Posterior cingulate gyrus (tissue), 11 donors: ENCODE measurements at regions of chr5 and their contacts with region 1.

Region 1: GRCh38 chr5:96934708-96935558 is 947 bp upstream of the LNPEP start:
- DNase-seq: peak; percentile 84 to 98 (median 92)

Region 2: DNA sequence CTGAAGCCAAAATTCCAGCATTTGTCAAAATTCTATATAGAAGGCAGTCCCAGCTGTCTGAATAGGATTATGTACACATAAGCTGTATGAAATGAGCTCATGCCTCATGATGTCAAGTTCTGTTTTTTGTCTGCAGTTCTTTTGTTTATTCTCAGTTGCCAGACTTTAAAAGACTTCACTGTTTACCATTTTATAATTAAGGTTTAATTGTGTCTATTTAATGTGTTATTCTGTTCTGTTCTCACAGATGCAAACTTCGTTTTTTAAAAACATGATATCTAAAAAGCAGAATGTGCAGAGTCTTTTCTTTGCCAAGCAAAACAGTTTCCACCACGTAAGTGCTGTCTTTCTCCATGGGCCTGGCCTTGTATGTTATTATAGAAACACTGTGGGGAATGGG is 158.3 kb before region 1 on chr5:
- intact Hi-C with region 1: loop called (anchors 10 kb)
- DNase-seq: no peak

Region 3: DNA sequence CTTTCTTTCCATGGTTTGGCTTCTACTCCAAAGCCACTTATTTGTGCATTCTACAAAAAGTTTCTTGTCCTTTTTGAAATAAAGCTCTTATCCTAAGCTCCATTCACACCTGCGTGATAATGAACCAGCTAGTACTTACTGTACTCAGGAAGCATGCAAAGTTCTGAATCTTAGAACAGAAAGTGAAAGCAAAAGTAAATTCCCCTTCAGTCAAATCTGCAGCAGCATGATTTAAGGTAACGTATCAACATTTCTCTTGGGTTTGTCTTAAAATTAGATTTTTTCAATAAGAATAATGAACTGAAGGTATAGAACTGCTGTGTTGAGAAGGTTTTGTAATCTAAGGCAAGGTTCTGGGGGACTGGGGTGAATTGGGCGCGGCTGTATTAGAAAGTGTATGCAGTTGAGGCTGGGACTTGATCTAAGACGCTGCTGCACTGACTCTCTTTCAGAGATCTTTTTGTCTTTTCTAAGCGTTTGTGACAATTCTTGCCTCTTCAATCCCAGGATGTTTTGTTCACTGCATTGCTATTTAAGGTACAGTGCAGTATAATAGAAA is 58.6 kb before region 1 on chr5 and contains the start of gene ERAP2:
- intact Hi-C with region 1: loop called (anchors 2 kb)
- DNase-seq: peak in 1 of 10 donors; percentile 55

Region 4: DNA sequence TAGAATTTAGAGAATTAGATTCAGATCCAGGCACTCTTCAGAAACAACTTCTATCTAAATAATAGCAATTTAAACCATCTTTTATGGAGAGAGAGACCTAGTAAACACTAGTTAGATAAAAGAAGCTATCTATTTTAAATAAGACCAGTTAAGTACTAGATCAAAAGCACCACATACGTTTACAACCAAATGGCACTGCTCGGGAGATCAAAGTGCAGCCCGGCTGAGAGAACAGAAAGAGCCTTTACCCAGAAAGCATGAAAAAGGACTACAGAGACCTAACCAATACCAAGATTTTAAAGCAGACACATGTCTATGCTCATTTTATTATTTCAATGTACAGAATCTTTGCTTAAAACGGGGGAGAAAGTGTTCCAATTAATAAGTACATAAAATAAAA is 176.7 kb after region 1 on chr5:
- intact Hi-C with region 1: no loop called
- DNase-seq: no peak

Region 5: DNA sequence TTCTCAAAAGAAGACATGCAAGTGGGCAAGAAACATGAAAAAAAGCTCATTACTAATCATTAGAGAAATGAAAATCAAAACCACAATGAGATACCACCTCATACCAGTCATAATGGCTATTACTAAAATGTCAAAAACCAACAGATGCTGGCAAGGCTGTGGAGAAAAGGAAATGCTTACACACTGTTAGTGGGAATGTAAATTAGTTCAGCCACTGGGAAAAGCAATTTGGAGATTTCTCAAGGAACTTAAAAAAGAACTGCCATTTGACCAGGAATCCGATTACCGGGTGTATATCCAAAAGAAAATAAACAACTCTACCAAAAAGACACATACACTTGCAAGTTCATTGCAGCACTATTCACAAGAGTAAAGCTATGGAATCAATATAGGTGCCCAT is 843.5 kb after region 1 on chr5:
- intact Hi-C with region 1: no loop called
- DNase-seq: no peak